CD14-positive monocyte (primary cell): ENCODE measurements at regions of chr18 and their contacts with region 1.

Region 1: DNA sequence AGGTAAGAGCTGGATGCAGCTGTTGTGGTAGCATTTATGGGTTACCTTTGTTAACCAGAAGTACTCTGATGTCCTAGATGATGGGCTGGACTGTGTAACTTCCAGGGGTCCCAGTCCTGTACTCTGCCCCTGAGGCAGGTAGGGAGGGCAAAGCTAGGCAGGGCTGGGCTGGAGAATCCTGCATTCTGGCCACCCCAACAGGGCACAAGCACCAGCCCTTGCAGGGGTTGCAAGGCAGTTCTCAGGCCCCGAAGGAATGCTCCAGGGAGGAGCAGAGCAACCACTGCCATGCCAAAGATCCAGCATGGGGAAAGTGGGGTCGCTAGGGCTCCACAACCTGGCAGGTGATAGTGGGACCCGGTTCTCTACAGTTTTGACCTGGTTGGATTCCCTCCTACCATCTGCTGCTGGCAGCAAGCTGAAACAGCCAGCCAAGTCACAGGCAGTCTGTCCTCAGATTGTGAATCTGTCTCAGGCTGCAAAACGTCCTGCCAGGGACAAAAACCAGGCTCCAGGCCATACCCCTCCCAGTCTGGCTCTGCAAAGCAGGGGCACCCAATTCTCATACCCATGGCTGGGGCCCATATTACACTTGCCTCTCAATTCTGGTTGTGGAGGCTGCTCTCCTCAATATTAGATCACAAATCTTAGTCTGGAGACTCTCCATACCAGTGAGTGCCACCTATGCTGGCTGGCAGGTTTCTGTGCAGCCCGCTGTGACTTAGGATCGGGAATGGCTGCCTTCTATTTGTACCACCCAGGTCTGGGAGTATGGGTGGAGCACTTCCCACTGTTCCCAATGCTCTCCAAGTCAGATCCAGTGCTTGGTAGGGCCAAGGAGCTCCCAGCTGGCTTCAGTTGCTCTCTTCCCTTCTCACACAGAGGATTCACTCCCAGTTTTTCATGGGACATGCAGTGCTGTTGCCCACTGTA is 61.1 kb downstream of the SMCHD1 start:
- DNase-seq: no peak
- H3K4me3 ChIP-seq: no peak overlapping the region
- H3K4me3 Mint-ChIP-seq: no peak overlapping the region
- H3K27ac ChIP-seq: peak overlapping the region in 1 of 2 donors; percentile 20
- H3K27ac Mint-ChIP-seq: peak overlapping the region in 3 of 7 donors; percentile 37 to 73 (median 60)
- H3K4me1 ChIP-seq: no peaks in the 10 kb centered on the region
- H3K4me1 Mint-ChIP-seq: peaks cover 3% of the 10 kb centered on the region
- H3K27me3 ChIP-seq: no peaks in the 10 kb centered on the region
- H3K27me3 Mint-ChIP-seq: no peaks in the 10 kb centered on the region
- CTCF ChIP-seq: no peak

Region 2: GRCh38 chr18:2662990-2663389 is 53.7 kb before region 1 on chr18:
- intact Hi-C with region 1: loop called in 1 of 2 experiments (anchors 10 kb)
- DNase-seq: no peak
- H3K4me3 ChIP-seq: no peak overlapping the region
- H3K4me3 Mint-ChIP-seq: no peak overlapping the region
- H3K27ac ChIP-seq: peak overlapping the region in 1 of 2 donors; percentile 42
- H3K27ac Mint-ChIP-seq: peak overlapping the region in 6 of 7 donors; percentile 33 to 84 (median 64)
- H3K4me1 ChIP-seq: peaks cover 12 to 17% of the 10 kb centered on the region in 2 donors
- H3K4me1 Mint-ChIP-seq: peaks cover 38% of the 10 kb centered on the region
- H3K27me3 ChIP-seq: no peaks in the 10 kb centered on the region
- H3K27me3 Mint-ChIP-seq: no peaks in the 10 kb centered on the region
- CTCF ChIP-seq: no peak